Posterior vena cava (tissue), 2 donors: ENCODE measurements at regions of chr17 and their contacts with region 1.

Region 1: DNA sequence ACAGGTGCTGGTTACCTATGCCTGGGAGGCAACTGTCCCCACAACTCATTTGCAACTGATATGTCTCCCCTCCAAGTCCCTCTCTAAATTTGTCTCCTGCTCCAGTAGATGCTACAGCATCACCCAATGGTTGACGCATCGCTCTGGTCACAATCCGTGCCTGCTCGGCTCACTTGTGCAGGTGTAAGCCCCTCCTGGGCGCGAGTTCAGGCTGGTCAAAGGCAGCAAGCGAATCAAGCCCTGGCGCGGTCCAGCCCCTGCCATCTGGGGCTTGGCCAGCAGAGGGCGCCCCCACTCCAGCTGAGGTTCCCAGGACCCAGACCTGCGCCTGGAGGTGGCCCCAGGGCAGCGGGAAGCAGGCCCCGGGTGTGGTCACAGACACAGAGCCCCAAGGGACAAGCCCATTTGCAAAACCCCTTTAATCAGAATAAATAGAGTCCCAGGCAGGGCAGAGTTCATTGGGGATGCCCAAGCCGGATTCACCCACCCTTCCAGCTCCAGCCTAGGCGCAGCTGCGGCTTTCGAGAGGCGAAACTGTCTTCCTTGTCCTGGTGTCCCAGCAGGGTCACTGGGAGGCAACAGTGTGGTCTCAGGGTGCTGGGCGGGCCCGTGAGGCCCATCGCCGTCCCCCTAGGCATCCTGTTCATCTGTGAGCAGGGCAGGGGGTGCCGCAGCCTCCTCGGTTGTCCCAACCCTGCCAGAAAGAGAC is 15.9 kb downstream of the TMC6 start:
- DNase-seq: peak; percentile 95

Region 2: DNA sequence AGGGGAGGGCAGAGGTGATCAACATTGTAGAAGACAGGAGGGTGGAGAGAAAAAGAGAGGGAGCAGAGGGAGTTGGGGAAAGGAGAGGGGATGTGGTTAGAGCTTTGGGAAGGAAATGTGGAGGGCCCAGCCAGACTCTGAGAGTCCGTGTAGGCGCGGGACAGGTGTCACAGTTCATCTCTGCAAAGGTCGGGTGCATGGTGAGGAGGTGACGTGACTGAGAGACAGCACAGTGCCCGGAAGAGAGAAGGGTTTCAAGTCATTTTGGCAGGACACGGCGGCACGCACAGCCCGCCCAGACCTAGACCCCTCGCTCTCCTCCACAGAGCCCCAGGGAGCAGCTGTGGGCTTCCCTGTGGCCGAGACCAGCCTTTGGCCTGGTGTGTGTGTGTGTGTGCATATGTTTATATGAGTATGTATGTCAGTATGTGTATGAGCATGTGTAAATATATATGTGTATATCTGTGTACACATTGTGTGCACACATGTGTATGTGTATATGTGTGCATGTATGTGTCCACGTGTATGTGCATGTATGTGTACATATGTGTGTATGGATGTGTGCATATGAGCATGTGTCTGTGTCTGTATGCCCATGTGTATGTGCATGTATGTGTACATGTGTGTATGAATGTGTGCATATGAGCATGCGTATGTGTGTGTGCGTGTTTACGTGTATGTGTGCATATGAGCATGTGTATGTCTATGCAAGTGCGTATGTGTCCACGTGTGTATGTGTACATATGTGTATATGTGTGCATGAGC is 867.3 kb before region 1 on chr17:
- intact Hi-C with region 1: no loop called
- DNase-seq: no peak

Region 3: GRCh38 chr17:78176548-78177025 is 63.9 kb after region 1 on chr17:
- intact Hi-C with region 1: loop called (anchors 2 to 5 kb)
- DNase-seq: peak; percentile 93

Region 4: DNA sequence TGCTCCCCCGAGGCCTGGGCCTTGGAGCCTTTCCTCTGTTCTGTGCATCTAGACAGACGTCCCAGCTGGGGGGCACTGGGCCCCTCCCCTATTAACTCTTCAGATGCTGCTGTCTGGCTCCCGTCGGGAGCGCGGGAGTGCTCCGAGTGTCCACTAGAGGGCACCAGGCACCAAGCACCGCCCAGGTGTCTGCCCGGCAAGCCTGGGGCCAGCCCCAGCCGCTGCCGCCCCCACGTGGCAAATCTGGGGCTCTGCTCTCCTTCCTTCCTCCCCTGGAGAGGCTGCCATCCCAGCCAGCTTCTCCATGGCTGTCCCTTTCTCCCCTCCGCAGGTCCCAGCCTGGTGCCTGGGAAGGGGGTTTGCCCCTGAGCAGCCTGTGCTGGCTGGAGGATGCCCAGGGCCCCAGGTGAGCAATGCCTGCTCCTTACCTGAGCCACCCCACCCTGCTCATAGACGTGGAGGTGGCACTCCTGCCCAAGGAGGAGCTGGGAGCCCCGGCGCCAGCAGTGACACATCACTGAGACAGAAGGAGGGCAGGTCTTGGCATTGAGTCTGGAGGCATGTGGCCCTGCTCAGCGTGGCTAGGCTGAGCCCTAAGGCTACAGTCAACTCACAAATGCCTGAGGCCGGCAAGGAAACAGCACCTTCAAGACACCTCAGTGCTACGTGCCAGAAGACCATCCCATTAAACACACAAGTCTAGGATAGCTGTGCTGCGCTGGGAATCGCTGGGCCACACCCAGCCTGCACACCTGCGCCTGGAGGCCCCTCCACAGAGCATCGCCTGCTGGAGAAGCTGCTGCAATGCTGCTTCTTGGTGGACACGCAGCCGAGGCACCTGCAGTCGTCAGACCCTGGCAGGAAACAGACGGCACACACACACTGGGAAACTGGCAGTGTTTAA is 138.5 kb after region 1 on chr17:
- intact Hi-C with region 1: loop called (anchors 5 kb)
- DNase-seq: peak; percentile 96